CD8-positive, alpha-beta T cell (primary cell): ENCODE measurements at regions of chr3 and their contacts with region 1.

Region 1: DNA sequence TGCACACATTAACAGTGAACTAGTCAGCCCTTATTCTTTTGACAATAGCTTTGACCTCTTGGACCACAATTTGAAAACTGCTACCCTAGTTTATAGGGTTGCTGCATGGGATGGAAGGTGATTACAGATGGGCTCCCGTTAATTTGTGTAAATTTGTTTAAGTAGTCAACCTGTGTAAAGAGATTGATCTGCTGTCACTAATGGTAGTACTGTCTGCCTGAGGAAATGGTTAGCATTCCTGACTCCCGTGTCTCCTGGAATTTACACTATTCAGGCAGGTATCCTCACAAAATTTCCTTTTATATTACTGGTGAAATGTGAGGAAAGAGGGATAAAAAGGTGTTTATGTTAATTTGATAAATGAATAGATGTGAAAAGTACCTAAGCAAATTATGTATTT is 15.3 kb upstream of the EBLN2 start:
- DNase-seq: no peak
- ATAC-seq: no peak
- H3K4me3 ChIP-seq: no peak overlapping the region
- H3K4me3 Mint-ChIP-seq: no peak overlapping the region
- H3K27ac ChIP-seq: no peak overlapping the region
- H3K27ac Mint-ChIP-seq: peak overlapping the region; percentile 53
- H3K4me1 ChIP-seq: peaks cover 4% of the 10 kb centered on the region
- H3K4me1 Mint-ChIP-seq: peaks cover 58% of the 10 kb centered on the region
- H3K27me3 ChIP-seq: no peaks in the 10 kb centered on the region
- H3K27me3 Mint-ChIP-seq: no peaks in the 10 kb centered on the region
- CTCF ChIP-seq: no peak

Region 2: GRCh38 chr3:72031581-72031980 is 1014.6 kb before region 1 on chr3:
- CTCF ChIA-PET with region 1: no interaction called
- POLR2A ChIA-PET with region 1: no interaction called
- intact Hi-C with region 1: no loop called
- DNase-seq: peak in 1 of 9 experiments; percentile 19
- ATAC-seq: no peak
- H3K4me3 ChIP-seq: no peak overlapping the region
- H3K4me3 Mint-ChIP-seq: no peak overlapping the region
- H3K27ac ChIP-seq: no peak overlapping the region
- H3K27ac Mint-ChIP-seq: no peak overlapping the region
- H3K4me1 ChIP-seq: no peaks in the 10 kb centered on the region
- H3K4me1 Mint-ChIP-seq: no peaks in the 10 kb centered on the region
- H3K27me3 ChIP-seq: no peaks in the 10 kb centered on the region
- H3K27me3 Mint-ChIP-seq: peaks cover 6% of the 10 kb centered on the region
- CTCF ChIP-seq: no peak

Region 3: DNA sequence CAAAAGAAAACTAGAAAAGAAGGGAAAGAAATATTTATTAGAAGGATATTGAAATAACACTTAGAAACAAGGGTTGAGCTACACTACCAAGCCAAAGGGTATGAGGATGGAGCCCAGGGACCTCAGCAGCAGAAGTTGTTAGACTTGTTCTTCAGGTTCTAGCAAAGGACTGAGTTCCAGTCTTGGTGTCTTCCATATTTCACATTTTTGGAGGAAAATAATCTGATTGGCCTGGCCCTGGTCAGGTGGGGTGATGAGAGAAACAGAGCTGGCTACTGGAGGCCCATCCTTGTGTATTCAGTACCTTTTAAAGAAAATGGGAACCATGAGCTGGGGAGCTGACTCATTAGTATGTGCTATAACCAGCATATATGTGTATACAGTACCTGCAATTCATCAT is 21.4 kb before region 1 on chr3:
- CTCF ChIA-PET with region 1: interaction called, 3 read pairs
- POLR2A ChIA-PET with region 1: no interaction called
- intact Hi-C with region 1: loop called in 1 of 2 experiments (anchors 2 kb)
- DNase-seq: no peak
- ATAC-seq: no peak
- H3K4me3 ChIP-seq: no peak overlapping the region
- H3K4me3 Mint-ChIP-seq: no peak overlapping the region
- H3K27ac ChIP-seq: no peak overlapping the region
- H3K27ac Mint-ChIP-seq: peak overlapping the region; percentile 41
- H3K4me1 ChIP-seq: peaks cover 41% of the 10 kb centered on the region
- H3K4me1 Mint-ChIP-seq: peaks cover 82% of the 10 kb centered on the region
- H3K27me3 ChIP-seq: no peaks in the 10 kb centered on the region
- H3K27me3 Mint-ChIP-seq: no peaks in the 10 kb centered on the region
- CTCF ChIP-seq: no peak

Region 4: DNA sequence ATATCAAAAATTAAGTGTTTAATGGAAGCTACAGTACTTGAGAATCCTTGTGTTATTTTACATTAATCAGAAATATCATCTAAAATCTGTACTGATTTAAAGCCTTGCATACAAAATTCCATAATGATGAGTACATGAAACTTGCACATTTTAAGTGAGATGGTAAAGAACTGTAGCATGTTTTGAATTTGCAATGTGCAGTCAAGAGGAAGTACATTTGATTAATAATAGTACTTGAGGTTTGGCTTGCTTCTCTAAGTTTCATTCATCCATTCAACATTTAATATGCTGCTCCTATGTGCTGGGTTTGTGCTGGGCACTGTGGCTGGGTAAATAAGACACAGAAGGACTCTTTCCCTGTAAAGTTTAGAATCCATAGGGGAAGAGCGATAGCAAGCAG is 1236.0 kb after region 1 on chr3:
- CTCF ChIA-PET with region 1: no interaction called
- POLR2A ChIA-PET with region 1: no interaction called
- intact Hi-C with region 1: no loop called
- DNase-seq: no peak
- ATAC-seq: no peak
- H3K4me3 ChIP-seq: no peak overlapping the region
- H3K4me3 Mint-ChIP-seq: no peak overlapping the region
- H3K27ac ChIP-seq: no peak overlapping the region
- H3K27ac Mint-ChIP-seq: no peak overlapping the region
- H3K4me1 ChIP-seq: no peaks in the 10 kb centered on the region
- H3K4me1 Mint-ChIP-seq: no peaks in the 10 kb centered on the region
- H3K27me3 ChIP-seq: no peaks in the 10 kb centered on the region
- H3K27me3 Mint-ChIP-seq: no peaks in the 10 kb centered on the region
- CTCF ChIP-seq: no peak